Activated CD8-positive, alpha-beta T cell treated with anti-CD3 and anti-CD28 coated beads, Interleukin-2, amount 10 ng/mL, durations not matched to agents 7 days and 5 days (primary cell): ENCODE measurements at regions of chr12 and their contacts with region 1.

Region 1: GRCh38 chr12:102061560-102062418 is at the start of gene WASHC3:
- DNase-seq: peak; percentile 98
- ATAC-seq: peak; percentile 92
- H3K4me3 Mint-ChIP-seq: peak within 1 kb of the TSS; percentile 85
- H3K27ac Mint-ChIP-seq: peak within 1 kb of the TSS; percentile 93
- H3K4me1 Mint-ChIP-seq: peaks cover 47% of the 10 kb centered on the region
- H3K27me3 Mint-ChIP-seq: no peaks in the 10 kb centered on the region
- total RNA-seq, gene WASHC3: 49.5 to 50.9 TPM

Region 2: DNA sequence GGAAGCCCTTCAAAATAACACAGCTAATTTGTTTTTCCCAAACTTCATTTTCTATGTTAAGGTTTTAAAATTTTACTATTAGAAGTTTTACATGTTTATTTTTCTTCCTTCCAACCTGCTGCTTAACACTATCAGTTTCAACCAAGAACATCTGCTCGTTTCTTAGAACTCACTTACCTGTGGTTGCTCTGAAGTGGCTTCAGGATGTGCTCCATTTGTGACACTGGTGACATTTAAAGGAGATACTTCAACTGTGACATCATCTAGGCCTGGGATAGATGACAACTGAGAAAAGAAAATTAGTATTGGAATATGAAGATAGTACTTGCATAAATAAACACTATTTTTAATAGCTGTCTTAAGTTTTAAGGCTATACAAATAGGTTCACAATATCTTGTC is 17.9 kb before region 1 on chr12:
- CTCF ChIA-PET with region 1: interaction called, 4 read pairs
- POLR2A ChIA-PET with region 1: interaction called, 17 read pairs
- DNase-seq: peak; percentile 72
- ATAC-seq: peak; percentile 99
- H3K4me3 Mint-ChIP-seq: no peak overlapping the region
- H3K27ac Mint-ChIP-seq: peak overlapping the region; percentile 41
- H3K4me1 Mint-ChIP-seq: peaks cover 19% of the 10 kb centered on the region
- H3K27me3 Mint-ChIP-seq: no peaks in the 10 kb centered on the region

Region 3: GRCh38 chr12:102119674-102120563 is 58.1 kb after region 1 on chr12 and contains the starts of genes NUP37 and PARPBP:
- CTCF ChIA-PET with region 1: no interaction called
- POLR2A ChIA-PET with region 1: interaction called, 17 read pairs
- DNase-seq: peak; percentile 95
- ATAC-seq: peak; percentile 97
- H3K4me3 Mint-ChIP-seq: peak within 1 kb of the TSS; percentile 84
- H3K27ac Mint-ChIP-seq: peak within 1 kb of the TSS; percentile 87
- H3K4me1 Mint-ChIP-seq: peaks cover 44% of the 10 kb centered on the region
- H3K27me3 Mint-ChIP-seq: no peaks in the 10 kb centered on the region
- total RNA-seq, gene NUP37: 66.4 to 70.2 TPM
- total RNA-seq, gene PARPBP: 32.2 to 35.9 TPM